ENCODE measurements at regions of chr7 and their contacts with region 1.

Region 1: DNA sequence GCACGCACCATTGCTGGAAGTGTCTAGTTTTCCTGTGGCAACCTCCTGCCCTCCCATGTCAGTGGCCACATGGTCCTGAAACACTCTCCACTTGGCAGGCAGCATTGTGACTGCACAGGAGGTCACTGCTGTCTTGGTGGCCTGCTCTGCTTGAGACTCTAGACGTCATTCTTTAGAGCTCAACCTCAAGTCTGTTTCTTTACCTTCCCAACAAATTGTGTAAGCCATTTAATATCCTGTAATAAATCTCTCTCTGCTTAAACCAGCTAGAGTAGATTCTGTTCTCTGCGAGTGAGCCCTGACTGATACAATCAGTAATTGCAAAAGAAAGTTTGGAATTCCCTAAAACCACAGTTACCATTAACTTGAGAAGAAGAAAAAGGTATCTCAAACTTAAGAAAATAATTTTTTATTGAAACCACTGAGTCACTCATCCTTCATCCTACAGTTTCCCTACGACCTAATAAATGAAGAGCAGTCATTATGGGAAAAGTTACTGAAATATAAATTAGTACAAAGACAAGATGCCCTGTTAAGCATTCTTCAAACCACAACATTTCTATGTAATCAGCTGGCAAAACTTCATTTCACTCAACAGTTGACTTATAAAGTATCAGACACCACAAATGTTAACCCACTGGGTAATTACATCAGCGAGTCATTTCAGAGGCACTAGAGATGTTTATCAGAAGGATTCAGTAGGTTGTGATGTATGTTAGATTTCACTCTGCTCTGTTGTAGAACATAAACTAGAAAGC is 18.0 kb downstream of the SLC25A13 start:
- DNase-seq: no peak
- H3K4me3 Mint-ChIP-seq: peak overlapping the region; percentile 23
- H3K27ac Mint-ChIP-seq: peak overlapping the region; percentile 71
- H3K4me1 Mint-ChIP-seq: peaks cover 52% of the 10 kb centered on the region
- H3K27me3 Mint-ChIP-seq: no peaks in the 10 kb centered on the region

Region 2: DNA sequence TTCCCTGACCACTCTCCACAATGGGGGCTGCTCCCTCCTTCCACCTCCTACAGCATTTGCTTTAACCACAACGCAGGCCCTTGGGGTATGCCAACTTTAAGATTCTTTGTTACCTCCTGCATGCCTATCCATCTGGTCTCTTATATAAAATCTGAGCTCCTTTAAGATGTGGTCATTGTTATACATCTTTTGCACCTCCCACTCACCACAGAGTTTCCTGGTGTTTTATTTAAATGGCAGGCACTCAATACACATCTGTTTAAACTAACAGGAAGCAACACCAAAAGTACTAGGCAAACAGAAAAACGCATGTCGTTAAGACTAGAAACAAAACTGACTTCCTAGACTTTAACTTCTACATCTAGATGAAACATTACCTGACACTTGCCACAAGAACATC is 18.3 kb before region 1 on chr7:
- CTCF ChIA-PET with region 1: no interaction called
- POLR2A ChIA-PET with region 1: interaction called, 20 read pairs
- intact Hi-C with region 1: loop called (anchors 1 kb)
- DNase-seq: peak; percentile 12
- H3K4me3 Mint-ChIP-seq: no peak overlapping the region
- H3K27ac Mint-ChIP-seq: peak overlapping the region; percentile 55
- H3K4me1 Mint-ChIP-seq: peaks cover 46% of the 10 kb centered on the region
- H3K27me3 Mint-ChIP-seq: no peaks in the 10 kb centered on the region

Region 3: GRCh38 chr7:96313940-96314339 is 10.1 kb after region 1 on chr7:
- CTCF ChIA-PET with region 1: no interaction called
- POLR2A ChIA-PET with region 1: no interaction called
- intact Hi-C with region 1: no loop called
- DNase-seq: no peak
- H3K4me3 Mint-ChIP-seq: no peak overlapping the region
- H3K27ac Mint-ChIP-seq: no peak overlapping the region
- H3K4me1 Mint-ChIP-seq: peaks cover 25% of the 10 kb centered on the region
- H3K27me3 Mint-ChIP-seq: no peaks in the 10 kb centered on the region

Region 4: GRCh38 chr7:96495751-96496216 is 191.9 kb after region 1 on chr7:
- CTCF ChIA-PET with region 1: no interaction called
- POLR2A ChIA-PET with region 1: no interaction called
- intact Hi-C with region 1: loop called (anchors 5 kb)
- DNase-seq: peak; percentile 64
- H3K4me3 Mint-ChIP-seq: peak overlapping the region; percentile 16
- H3K27ac Mint-ChIP-seq: peak overlapping the region; percentile 49
- H3K4me1 Mint-ChIP-seq: peaks cover 11% of the 10 kb centered on the region
- H3K27me3 Mint-ChIP-seq: peaks cover 3% of the 10 kb centered on the region